Dorsolateral prefrontal cortex (tissue), 120 donors: ENCODE measurements at regions of chr20 and their contacts with region 1.

Region 1: GRCh38 chr20:36199345-36200257 is 36.7 kb upstream of the AAR2 start:
- DNase-seq: peak; percentile 74 to 94 (median 83)
- H3K4me3 ChIP-seq: no peak overlapping the region
- H3K27ac ChIP-seq: peak overlapping the region in 26 of 59 donors; percentile 2 to 70 (median 39)
- H3K27me3 ChIP-seq: no peaks in the 10 kb centered on the region
- CTCF ChIP-seq: peak; percentile 82 to 98 (median 92)

Region 2: GRCh38 chr20:35994994-35995453 is 204.6 kb before region 1 on chr20:
- intact Hi-C with region 1: loop called in 1 of 2 experiments (anchors 2 kb)
- DNase-seq: peak; percentile 68 to 83 (median 76)
- H3K4me3 ChIP-seq: no peak overlapping the region
- H3K27ac ChIP-seq: peak overlapping the region in 1 of 59 donors; percentile 36
- H3K27me3 ChIP-seq: no peaks in the 10 kb centered on the region
- CTCF ChIP-seq: peak; percentile 43 to 92 (median 83)

Region 3: DNA sequence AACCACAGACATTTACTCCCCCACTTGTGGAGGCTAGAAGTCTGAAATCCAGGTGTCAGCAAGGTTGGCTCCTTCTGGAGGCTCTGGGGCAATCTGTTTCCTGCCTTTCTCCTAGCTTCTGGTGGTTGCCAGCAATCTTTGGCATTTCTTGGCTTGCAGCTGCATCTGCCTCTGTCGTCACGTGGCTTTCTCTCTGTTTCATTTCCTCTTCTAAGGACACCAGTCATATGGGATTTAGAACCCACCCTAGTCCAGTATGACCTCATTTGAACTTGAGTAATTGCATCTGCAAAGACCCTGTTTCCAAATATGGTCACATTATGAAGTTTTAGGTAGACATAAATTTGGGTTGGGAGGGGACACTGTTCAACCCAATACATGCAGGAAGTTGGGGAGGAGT is 101.2 kb before region 1 on chr20:
- intact Hi-C with region 1: no loop called
- DNase-seq: peak in 2 of 10 donors; percentile 10 to 36
- H3K4me3 ChIP-seq: no peak overlapping the region
- H3K27ac ChIP-seq: peak overlapping the region in 41 of 59 donors; percentile 3 to 78 (median 57)
- H3K27me3 ChIP-seq: peaks cover 0 to 3% (median 0%) of the 10 kb centered on the region in 45 donors
- CTCF ChIP-seq: no peak

Region 4: GRCh38 chr20:36153736-36154699 is 45.6 kb before region 1 on chr20:
- intact Hi-C with region 1: loop called (anchors 1 to 5 kb)
- DNase-seq: peak; percentile 76 to 92 (median 84)
- H3K4me3 ChIP-seq: peak overlapping the region; percentile 31 to 94 (median 78)
- H3K27ac ChIP-seq: peak overlapping the region; percentile 74 to 97 (median 93)
- H3K27me3 ChIP-seq: no peaks in the 10 kb centered on the region
- CTCF ChIP-seq: no peak

Region 5: GRCh38 chr20:36439040-36439730 is 239.6 kb after region 1 on chr20:
- intact Hi-C with region 1: loop called (anchors 2 to 5 kb)
- DNase-seq: peak; percentile 62 to 86 (median 78)
- H3K4me3 ChIP-seq: no peak overlapping the region
- H3K27ac ChIP-seq: no peak overlapping the region
- H3K27me3 ChIP-seq: peaks cover 0 to 2% (median 0%) of the 10 kb centered on the region in 45 donors
- CTCF ChIP-seq: peak; percentile 67 to 96 (median 90)

Region 6: GRCh38 chr20:36591854-36592641 is 392.4 kb after region 1 on chr20:
- intact Hi-C with region 1: loop called (anchors 10 kb)
- DNase-seq: peak in 5 of 10 donors; percentile 25 to 55 (median 38)
- H3K4me3 ChIP-seq: no peak overlapping the region
- H3K27ac ChIP-seq: no peak overlapping the region
- H3K27me3 ChIP-seq: no peaks in the 10 kb centered on the region
- CTCF ChIP-seq: peak in 53 of 56 donors; percentile 33 to 70 (median 52)